Tibial artery (tissue), 4 donors: ENCODE measurements at regions of chr12 and their contacts with region 1.

Region 1: DNA sequence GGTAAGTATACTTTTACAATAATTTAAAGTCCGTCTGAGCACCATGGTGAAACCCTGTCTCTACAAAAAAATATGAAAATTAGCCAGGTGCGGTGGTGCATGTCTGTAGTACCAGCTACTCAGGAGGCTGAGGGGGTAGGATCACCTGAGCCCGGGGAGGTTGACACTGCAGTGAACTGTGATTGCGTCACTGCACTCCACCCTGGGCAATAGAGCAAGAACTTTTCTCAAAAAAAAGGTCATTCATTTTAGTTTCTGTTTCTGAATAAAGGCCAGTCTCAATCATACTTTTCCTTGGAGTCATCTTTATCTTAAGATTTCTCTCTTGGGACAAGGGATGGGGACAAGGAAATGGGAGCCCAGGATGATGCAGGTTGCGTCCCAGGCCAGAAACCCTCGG is 12.9 kb downstream of the ANKRD13A start:
- DNase-seq: no peak
- H3K4me3 ChIP-seq: no peak overlapping the region
- H3K27ac ChIP-seq: no peak overlapping the region
- H3K4me1 ChIP-seq: no peaks in the 10 kb centered on the region
- H3K27me3 ChIP-seq: no peaks in the 10 kb centered on the region
- CTCF ChIP-seq: no peak

Region 2: GRCh38 chr12:109847142-109847735 is 164.9 kb before region 1 on chr12:
- intact Hi-C with region 1: no loop called
- DNase-seq: no peak
- H3K4me3 ChIP-seq: no peak overlapping the region
- H3K27ac ChIP-seq: no peak overlapping the region
- H3K4me1 ChIP-seq: peaks cover 0 to 8% (median 5%) of the 10 kb centered on the region in 4 donors
- H3K27me3 ChIP-seq: no peaks in the 10 kb centered on the region
- CTCF ChIP-seq: no peak

Region 3: GRCh38 chr12:110079477-110080400 is 67.6 kb after region 1 on chr12:
- intact Hi-C with region 1: loop called (anchors 10 kb)
- DNase-seq: peak in 1 of 2 donors; percentile 49
- H3K4me3 ChIP-seq: peak overlapping the region in 1 of 2 donors; percentile 10
- H3K27ac ChIP-seq: no peak overlapping the region
- H3K4me1 ChIP-seq: no peaks in the 10 kb centered on the region
- H3K27me3 ChIP-seq: no peaks in the 10 kb centered on the region
- CTCF ChIP-seq: no peak